PC-9 (cell line): ENCODE measurements at regions of chr11 and their contacts with region 1.

Region 1: GRCh38 chr11:73350908-73351636 is 25.1 kb upstream of the RELT start:
- DNase-seq: peak; percentile 61 to 63
- H3K4me3 ChIP-seq: no peak overlapping the region
- H3K27ac ChIP-seq: no peak overlapping the region
- H3K4me1 ChIP-seq: no peaks in the 10 kb centered on the region
- H3K27me3 ChIP-seq: no peaks in the 10 kb centered on the region
- CTCF ChIP-seq: peak; percentile 99

Region 2: GRCh38 chr11:72831513-72832300 is 519.4 kb before region 1 on chr11:
- CTCF ChIA-PET with region 1: no interaction called
- POLR2A ChIA-PET with region 1: interaction called, 23 read pairs
- intact Hi-C with region 1: no loop called
- DNase-seq: peak; percentile 61 to 85
- H3K4me3 ChIP-seq: no peak overlapping the region
- H3K27ac ChIP-seq: no peak overlapping the region
- H3K4me1 ChIP-seq: 0 out of 2 replicates have a peak, but pooled peaks cover 4% of the 10 kb centered on the region
- H3K27me3 ChIP-seq: no peaks in the 10 kb centered on the region
- CTCF ChIP-seq: peak; percentile 97

Region 3: GRCh38 chr11:72951193-72951592 is 399.9 kb before region 1 on chr11:
- CTCF ChIA-PET with region 1: no interaction called
- POLR2A ChIA-PET with region 1: no interaction called
- intact Hi-C with region 1: no loop called
- DNase-seq: no peak
- H3K4me3 ChIP-seq: no peak overlapping the region
- H3K27ac ChIP-seq: no peak overlapping the region
- H3K4me1 ChIP-seq: no peaks in the 10 kb centered on the region
- H3K27me3 ChIP-seq: no peaks in the 10 kb centered on the region
- CTCF ChIP-seq: no peak

Region 4: GRCh38 chr11:73376160-73376802 is 25.2 kb after region 1 on chr11 and contains the start of gene RELT:
- CTCF ChIA-PET with region 1: interaction called, 13 read pairs
- POLR2A ChIA-PET with region 1: no interaction called
- intact Hi-C with region 1: no loop called
- DNase-seq: peak; percentile 78 to 97
- H3K4me3 ChIP-seq: peak within 1 kb of the TSS; percentile 81
- H3K27ac ChIP-seq: no peak within 1 kb of the TSS
- H3K4me1 ChIP-seq: peaks cover 13% of the 10 kb centered on the region; the same call in 1 of the 2 replicates
- H3K27me3 ChIP-seq: no peaks in the 10 kb centered on the region
- CTCF ChIP-seq: peak; percentile 92
- total RNA-seq, gene RELT: 7.8 and 10.7 TPM in 2 replicates

Region 5: GRCh38 chr11:73393479-73394380 is 42.7 kb after region 1 on chr11:
- CTCF ChIA-PET with region 1: interaction called, 18 read pairs
- POLR2A ChIA-PET with region 1: no interaction called
- intact Hi-C with region 1: loop called (anchors 1 kb)
- DNase-seq: peak; percentile 52 to 78
- H3K4me3 ChIP-seq: no peak overlapping the region
- H3K27ac ChIP-seq: no peak overlapping the region
- H3K4me1 ChIP-seq: 0 out of 2 replicates have a peak, but pooled peaks cover 1% of the 10 kb centered on the region
- H3K27me3 ChIP-seq: no peaks in the 10 kb centered on the region
- CTCF ChIP-seq: peak; percentile 87

Region 6: DNA sequence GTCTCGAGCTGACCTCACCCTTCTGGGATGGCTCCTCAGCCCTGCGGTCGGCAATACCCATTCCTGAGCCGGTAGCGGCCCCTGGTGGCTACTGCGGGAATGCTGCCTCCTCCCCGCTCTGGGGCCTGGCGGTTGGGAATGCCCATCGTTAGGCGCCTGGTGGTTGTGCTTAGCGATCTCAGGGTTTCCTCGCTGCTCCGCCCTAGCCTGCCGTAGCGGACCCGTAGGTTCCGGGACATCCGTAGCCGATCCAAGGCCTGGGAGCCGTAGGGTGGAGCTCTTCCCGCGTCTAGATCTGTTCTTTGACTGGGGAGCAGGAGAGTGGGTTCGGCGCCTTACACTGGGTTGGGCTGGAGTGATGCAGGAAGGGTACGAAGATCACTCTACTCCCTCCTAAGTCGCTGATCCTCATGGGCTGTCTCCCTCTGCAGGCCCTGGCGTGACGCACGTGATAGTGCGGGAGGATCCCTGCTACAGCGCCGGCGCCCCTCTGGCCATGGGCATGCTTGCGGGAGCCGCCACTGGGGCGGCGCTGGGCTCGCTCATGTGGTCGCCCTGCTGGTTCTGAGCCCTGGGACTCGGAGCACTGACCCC is 310.1 kb after region 1 on chr11:
- CTCF ChIA-PET with region 1: interaction called, 11 read pairs
- POLR2A ChIA-PET with region 1: no interaction called
- intact Hi-C with region 1: loop called (anchors 1 kb)
- DNase-seq: peak; percentile 50 to 87
- H3K4me3 ChIP-seq: no peak overlapping the region
- H3K27ac ChIP-seq: no peak overlapping the region
- H3K4me1 ChIP-seq: peaks cover 14% of the 10 kb centered on the region
- H3K27me3 ChIP-seq: no peaks in the 10 kb centered on the region
- CTCF ChIP-seq: peak; percentile 97

Region 7: DNA sequence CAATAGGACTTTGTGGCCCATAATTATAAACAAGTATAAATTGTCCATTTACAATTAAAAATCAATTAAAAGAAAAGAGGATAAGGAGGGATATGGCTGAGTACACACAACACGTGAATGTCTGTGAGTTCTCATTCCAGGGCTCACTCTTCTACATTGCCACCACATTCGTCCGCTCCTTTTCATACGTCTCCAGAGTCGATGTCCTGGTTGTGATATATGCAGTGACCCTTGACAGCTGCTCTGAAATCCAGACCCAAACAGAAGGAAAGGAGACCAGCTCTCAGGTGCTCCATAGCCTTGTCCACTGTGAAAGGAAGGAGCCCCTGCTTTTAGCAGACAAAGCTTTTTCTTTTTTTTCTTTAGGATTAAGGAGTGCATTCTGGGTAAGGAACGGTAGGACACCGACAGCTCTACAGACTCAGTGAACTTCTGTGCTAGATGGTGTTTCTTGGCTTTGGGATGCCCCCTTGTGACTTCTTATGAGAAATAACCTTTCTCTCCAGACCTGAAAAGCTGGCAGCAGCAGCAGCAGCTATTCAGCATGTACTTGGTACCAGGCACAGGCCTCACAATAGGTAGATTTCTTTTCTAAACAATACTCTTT is 580.1 kb after region 1 on chr11:
- CTCF ChIA-PET with region 1: no interaction called
- POLR2A ChIA-PET with region 1: no interaction called
- intact Hi-C with region 1: loop called (anchors 5 kb)
- DNase-seq: peak; percentile 34 to 43
- H3K4me3 ChIP-seq: no peak overlapping the region
- H3K27ac ChIP-seq: no peak overlapping the region
- H3K4me1 ChIP-seq: no peaks in the 10 kb centered on the region
- H3K27me3 ChIP-seq: no peaks in the 10 kb centered on the region
- CTCF ChIP-seq: peak; percentile 66